ENCODE measurements at regions of chr6 and their contacts with region 1.

Region 1: GRCh38 chr6:99868074-99868702 is 125.8 kb downstream of the MCHR2 start:
- DNase-seq: peak; percentile 20 to 66 (median 50)
- ATAC-seq: peak; percentile 70
- H3K4me3 ChIP-seq: no peak overlapping the region
- H3K4me3 Mint-ChIP-seq: peak overlapping the region in 4 of 10 donors; percentile 11 to 42 (median 12)
- H3K27ac ChIP-seq: no peak overlapping the region
- H3K27ac Mint-ChIP-seq: peak overlapping the region in 1 of 9 donors; percentile 18
- H3K4me1 ChIP-seq: no peaks in the 10 kb centered on the region
- H3K4me1 Mint-ChIP-seq: peaks cover 0 to 9% (median 5%) of the 10 kb centered on the region in 7 donors
- H3K27me3 ChIP-seq: peaks cover 0 to 4% of the 10 kb centered on the region in 2 donors
- H3K27me3 Mint-ChIP-seq: peaks cover 20 to 38% (median 25%) of the 10 kb centered on the region in 5 donors

Region 2: DNA sequence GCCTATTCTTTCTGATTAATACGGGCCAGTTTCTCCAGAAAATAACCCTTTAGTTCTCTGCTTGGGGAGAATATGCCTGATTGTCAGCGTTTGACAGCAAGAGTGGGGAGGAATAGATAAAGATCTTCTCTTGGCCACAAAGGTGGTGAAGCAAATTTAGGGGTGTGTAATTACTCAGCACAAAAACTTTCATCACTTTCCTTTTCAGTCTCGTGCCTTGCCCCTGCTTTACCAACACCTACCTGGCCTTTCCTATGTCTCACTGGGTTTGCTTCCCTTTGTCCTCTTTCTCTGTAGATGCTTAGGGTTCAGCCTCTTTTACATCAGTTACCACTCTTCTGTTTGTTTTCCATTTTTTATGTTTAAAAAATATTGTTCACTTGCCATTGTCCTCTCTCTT is 26.6 kb after region 1 on chr6:
- CTCF ChIA-PET with region 1: no interaction called
- POLR2A ChIA-PET with region 1: no interaction called
- intact Hi-C with region 1: no loop called
- DNase-seq: no peak
- ATAC-seq: no peak
- H3K4me3 ChIP-seq: no peak overlapping the region
- H3K4me3 Mint-ChIP-seq: no peak overlapping the region
- H3K27ac ChIP-seq: no peak overlapping the region
- H3K27ac Mint-ChIP-seq: no peak overlapping the region
- H3K4me1 ChIP-seq: no peaks in the 10 kb centered on the region
- H3K4me1 Mint-ChIP-seq: peaks cover 0 to 2% (median 0%) of the 10 kb centered on the region in 7 donors
- H3K27me3 ChIP-seq: no peaks in the 10 kb centered on the region
- H3K27me3 Mint-ChIP-seq: peaks cover 0 to 47% (median 18%) of the 10 kb centered on the region in 5 donors

Region 3: DNA sequence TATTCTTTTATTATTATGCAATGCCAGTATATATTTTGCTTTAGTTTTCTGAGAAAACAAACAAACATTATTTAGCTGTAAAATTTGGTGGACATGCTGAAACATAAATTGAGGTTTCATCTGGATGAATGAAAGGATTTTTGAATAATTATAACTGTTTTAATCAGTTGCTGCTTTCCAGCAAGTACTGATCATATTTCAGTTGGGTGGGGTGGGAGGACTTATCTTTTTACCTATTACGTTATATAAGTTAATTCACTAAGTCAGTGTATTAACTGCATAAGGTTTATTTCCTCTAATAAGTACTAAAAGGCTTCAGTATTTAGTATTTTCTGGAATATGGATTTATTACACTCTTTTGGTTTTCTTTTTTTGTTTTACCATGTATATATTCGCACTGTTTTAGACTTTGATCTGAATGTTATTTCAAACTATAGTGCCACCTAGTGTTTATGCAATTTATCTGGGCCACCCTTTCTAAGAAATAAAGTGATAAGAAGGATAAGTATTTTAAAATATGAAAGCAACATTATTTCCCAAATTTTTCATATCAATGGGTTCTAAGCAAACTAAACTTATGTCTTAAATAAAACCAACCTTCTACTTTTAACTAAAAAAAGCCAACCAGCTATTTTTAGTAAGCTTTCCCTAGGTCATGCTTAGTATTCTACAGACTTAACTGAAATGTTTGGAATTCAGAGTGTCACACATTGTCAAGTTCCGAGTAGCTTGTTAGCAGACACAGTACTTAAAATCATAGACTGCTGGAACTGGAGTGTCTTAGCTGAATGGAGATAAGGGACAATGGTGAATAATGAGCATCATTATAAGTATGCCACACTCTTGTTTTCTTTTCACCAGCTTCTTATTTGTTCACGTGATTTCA is 231.2 kb after region 1 on chr6:
- CTCF ChIA-PET with region 1: interaction called, 5 read pairs
- POLR2A ChIA-PET with region 1: no interaction called
- intact Hi-C with region 1: loop called in 1 of 2 experiments (anchors 1 kb)
- DNase-seq: no peak
- ATAC-seq: no peak
- H3K4me3 ChIP-seq: no peak overlapping the region
- H3K4me3 Mint-ChIP-seq: no peak overlapping the region
- H3K27ac ChIP-seq: no peak overlapping the region
- H3K27ac Mint-ChIP-seq: no peak overlapping the region
- H3K4me1 ChIP-seq: no peaks in the 10 kb centered on the region
- H3K4me1 Mint-ChIP-seq: no peaks in the 10 kb centered on the region
- H3K27me3 ChIP-seq: no peaks in the 10 kb centered on the region
- H3K27me3 Mint-ChIP-seq: peaks cover 4 to 15% (median 9%) of the 10 kb centered on the region in 5 donors

Region 4: DNA sequence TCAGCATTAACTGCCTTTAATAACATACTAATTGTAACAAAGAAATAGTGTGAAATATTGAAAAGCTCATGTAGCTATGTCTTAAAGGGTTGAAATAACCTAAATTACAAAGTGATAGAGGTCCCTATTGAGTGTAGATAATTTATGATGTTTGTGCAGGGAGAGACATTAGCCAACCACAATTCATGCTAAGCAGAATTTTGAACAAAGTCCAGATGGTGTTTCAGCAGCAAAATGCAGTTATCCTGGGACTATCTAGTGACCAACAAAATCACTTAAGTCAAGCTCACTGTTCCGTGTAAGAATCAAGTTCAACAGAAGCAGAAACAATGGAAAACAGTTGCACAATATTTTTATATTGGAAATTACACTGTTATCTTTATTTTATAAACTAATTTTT is 378.0 kb after region 1 on chr6:
- CTCF ChIA-PET with region 1: no interaction called
- POLR2A ChIA-PET with region 1: no interaction called
- intact Hi-C with region 1: no loop called
- DNase-seq: no peak
- ATAC-seq: no peak
- H3K4me3 ChIP-seq: no peak overlapping the region
- H3K4me3 Mint-ChIP-seq: no peak overlapping the region
- H3K27ac ChIP-seq: no peak overlapping the region
- H3K27ac Mint-ChIP-seq: no peak overlapping the region
- H3K4me1 ChIP-seq: no peaks in the 10 kb centered on the region
- H3K4me1 Mint-ChIP-seq: no peaks in the 10 kb centered on the region
- H3K27me3 ChIP-seq: no peaks in the 10 kb centered on the region
- H3K27me3 Mint-ChIP-seq: peaks cover 0 to 3% (median 0%) of the 10 kb centered on the region in 5 donors

Region 5: DNA sequence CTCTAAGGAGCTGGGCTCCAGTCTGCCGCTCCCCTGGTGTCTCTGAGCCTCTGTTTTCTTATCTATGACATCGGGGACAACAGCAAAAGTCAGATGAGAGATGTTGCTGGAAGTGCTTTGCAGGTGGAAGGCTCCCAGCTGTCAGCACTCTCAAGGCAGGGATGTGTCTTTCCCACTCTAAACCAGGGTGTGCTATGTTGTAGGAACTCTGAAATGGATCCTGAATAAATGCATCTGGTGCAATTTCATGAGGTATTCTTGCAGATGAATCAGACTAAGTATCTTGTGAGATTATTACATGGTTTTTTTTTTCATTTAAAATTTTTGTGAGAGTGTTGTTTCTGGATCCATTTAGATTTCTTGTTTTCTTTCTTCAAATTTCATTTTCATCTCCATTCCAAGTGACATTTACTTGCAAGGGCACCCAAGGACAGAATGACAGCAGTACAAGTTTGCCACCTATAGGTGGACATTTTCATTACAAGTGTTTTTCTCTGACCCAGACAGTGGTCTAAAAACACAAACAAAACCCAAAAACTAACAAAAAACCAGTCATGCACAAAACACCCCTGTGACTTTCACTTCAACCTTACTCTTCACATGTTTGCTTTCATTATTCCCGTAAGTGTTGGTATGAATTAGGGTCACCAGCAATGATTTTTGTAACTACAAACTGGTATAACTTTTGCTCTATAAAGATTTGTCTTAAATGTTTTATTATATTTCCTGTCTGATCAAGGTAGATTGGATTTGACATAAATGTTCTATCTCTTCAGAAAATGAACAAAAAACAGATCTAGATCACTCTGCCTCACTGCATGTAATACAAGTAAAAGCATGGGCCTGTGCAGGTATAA is 611.2 kb after region 1 on chr6:
- CTCF ChIA-PET with region 1: no interaction called
- POLR2A ChIA-PET with region 1: no interaction called
- intact Hi-C with region 1: loop called in 1 of 2 experiments (anchors 2 kb)
- DNase-seq: no peak
- ATAC-seq: peak; percentile 34
- H3K4me3 ChIP-seq: no peak overlapping the region
- H3K4me3 Mint-ChIP-seq: no peak overlapping the region
- H3K27ac ChIP-seq: no peak overlapping the region
- H3K27ac Mint-ChIP-seq: no peak overlapping the region
- H3K4me1 ChIP-seq: no peaks in the 10 kb centered on the region
- H3K4me1 Mint-ChIP-seq: no peaks in the 10 kb centered on the region
- H3K27me3 ChIP-seq: no peaks in the 10 kb centered on the region
- H3K27me3 Mint-ChIP-seq: peaks cover 26 to 37% (median 28%) of the 10 kb centered on the region in 5 donors

Region 6: GRCh38 chr6:100664274-100665040 is 796.3 kb after region 1 on chr6:
- CTCF ChIA-PET with region 1: no interaction called
- POLR2A ChIA-PET with region 1: no interaction called
- intact Hi-C with region 1: loop called (anchors 2 to 5 kb)
- DNase-seq: peak in 4 of 9 donors; percentile 4 to 27 (median 22)
- ATAC-seq: peak; percentile 59
- H3K4me3 ChIP-seq: no peak overlapping the region
- H3K4me3 Mint-ChIP-seq: no peak overlapping the region
- H3K27ac ChIP-seq: no peak overlapping the region
- H3K27ac Mint-ChIP-seq: peak overlapping the region in 5 of 9 donors; percentile 1 to 74 (median 22)
- H3K4me1 ChIP-seq: no peaks in the 10 kb centered on the region
- H3K4me1 Mint-ChIP-seq: peaks cover 0 to 12% (median 5%) of the 10 kb centered on the region in 7 donors
- H3K27me3 ChIP-seq: no peaks in the 10 kb centered on the region
- H3K27me3 Mint-ChIP-seq: no peaks in the 10 kb centered on the region

Measured in naive thymus-derived CD4-positive, alpha-beta T cell (primary cell).